Activated T-helper 2 cell treated with anti-CD3 and anti-CD28 coated beads, Interferon-gamma antibody, Interleukin-2, Interleukin-4, amounts not matched to agents 10 μg/mL and 5 μg/mL and 100 μg/mL, durations not matched to agents 14 hours and 24 hours and 36 hours (primary cell): ENCODE measurements at regions of chr17 and their contacts with region 1.

Region 1: DNA sequence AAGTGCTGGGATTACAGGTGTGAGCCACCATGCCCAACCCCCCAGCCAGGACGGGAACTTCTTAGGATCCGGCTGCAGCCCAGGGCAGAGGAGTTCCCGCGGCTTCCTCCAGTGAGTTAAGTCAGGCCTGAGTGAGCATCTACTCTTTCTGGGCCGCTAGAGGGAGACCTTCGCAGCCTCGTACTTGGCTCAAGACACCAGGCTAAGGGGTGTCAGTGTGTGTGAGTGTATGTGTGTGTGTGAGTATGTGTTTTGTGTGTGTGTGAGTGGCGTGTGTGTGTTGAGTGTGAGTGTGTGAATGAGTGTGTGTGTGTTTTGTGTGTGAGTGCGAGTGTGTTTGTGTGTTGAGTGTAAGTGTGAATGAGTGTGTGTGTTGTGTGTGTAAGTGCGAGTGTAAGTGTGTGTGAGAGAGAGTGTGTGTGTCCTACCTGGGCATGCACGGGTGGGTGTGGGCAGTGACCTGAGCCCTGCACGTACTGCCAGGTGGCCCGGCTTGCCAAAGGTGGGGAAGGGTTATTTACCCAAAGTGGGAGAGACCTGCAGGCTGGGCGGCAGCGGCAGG is 58.5 kb downstream of the TMEM235 start:
- DNase-seq: peak; percentile 62
- H3K4me3 Mint-ChIP-seq: no peak overlapping the region
- H3K27ac Mint-ChIP-seq: no peak overlapping the region
- H3K4me1 Mint-ChIP-seq: peaks cover 2% of the 10 kb centered on the region
- H3K27me3 Mint-ChIP-seq: no peaks in the 10 kb centered on the region

Region 2: DNA sequence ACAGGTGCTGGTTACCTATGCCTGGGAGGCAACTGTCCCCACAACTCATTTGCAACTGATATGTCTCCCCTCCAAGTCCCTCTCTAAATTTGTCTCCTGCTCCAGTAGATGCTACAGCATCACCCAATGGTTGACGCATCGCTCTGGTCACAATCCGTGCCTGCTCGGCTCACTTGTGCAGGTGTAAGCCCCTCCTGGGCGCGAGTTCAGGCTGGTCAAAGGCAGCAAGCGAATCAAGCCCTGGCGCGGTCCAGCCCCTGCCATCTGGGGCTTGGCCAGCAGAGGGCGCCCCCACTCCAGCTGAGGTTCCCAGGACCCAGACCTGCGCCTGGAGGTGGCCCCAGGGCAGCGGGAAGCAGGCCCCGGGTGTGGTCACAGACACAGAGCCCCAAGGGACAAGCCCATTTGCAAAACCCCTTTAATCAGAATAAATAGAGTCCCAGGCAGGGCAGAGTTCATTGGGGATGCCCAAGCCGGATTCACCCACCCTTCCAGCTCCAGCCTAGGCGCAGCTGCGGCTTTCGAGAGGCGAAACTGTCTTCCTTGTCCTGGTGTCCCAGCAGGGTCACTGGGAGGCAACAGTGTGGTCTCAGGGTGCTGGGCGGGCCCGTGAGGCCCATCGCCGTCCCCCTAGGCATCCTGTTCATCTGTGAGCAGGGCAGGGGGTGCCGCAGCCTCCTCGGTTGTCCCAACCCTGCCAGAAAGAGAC is 177.2 kb before region 1 on chr17:
- intact Hi-C with region 1: no loop called
- DNase-seq: peak; percentile 69
- H3K4me3 Mint-ChIP-seq: no peak overlapping the region
- H3K27ac Mint-ChIP-seq: peak overlapping the region; percentile 84
- H3K4me1 Mint-ChIP-seq: peaks cover 33% of the 10 kb centered on the region
- H3K27me3 Mint-ChIP-seq: no peaks in the 10 kb centered on the region

Region 3: DNA sequence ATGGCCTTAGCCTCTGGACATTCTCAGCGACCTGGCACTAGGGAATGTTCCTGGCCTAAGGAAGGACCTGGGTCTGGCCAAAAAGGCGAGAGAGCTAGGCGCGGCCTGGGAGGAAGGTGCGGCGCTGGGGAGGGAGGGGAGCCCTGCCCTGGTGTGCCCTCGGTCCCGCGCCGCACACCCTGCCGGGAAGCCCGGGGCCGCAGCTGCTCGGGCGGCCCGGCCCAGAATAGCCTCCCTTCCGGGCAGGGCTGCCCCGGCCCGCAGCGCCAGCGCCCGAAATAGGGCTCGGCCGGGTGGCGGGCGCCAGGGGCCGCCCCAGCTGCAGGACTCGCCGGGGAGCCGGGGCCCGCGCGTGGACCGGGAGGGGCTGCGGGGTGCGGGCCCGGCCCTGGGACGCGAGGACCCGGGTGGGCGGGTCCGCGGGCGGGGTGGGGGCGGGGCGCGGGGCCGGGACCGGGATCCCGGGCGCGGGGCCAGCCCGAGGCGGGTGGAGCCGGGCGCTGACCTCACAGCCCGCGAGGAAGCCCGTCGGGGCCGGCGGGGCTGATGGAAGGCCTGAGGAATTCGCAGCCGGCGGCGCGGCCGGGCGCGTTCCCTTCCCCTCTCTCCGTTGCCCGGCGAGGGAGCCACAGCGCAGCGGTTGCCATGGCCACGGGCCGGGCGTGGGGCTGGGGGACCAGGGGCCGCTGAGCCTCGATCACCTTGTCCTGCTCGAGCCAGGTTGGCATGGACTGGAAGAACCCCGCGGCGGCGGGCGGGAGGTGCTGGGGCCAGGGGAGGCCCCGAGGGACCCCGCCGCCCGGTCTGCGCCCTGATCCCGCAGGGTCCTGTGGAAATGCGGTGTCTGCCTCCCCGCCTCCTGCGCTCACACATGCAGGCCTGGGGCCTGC is 51.9 kb after region 1 on chr17:
- intact Hi-C with region 1: no loop called
- DNase-seq: no peak
- H3K4me3 Mint-ChIP-seq: no peak overlapping the region
- H3K27ac Mint-ChIP-seq: no peak overlapping the region
- H3K4me1 Mint-ChIP-seq: peaks cover 35% of the 10 kb centered on the region
- H3K27me3 Mint-ChIP-seq: peaks cover 9% of the 10 kb centered on the region

Region 4: GRCh38 chr17:78421484-78422266 is 131.8 kb after region 1 on chr17:
- intact Hi-C with region 1: loop called (anchors 5 kb)
- DNase-seq: peak; percentile 61
- H3K4me3 Mint-ChIP-seq: no peak overlapping the region
- H3K27ac Mint-ChIP-seq: peak overlapping the region; percentile 71
- H3K4me1 Mint-ChIP-seq: peaks cover 21% of the 10 kb centered on the region
- H3K27me3 Mint-ChIP-seq: no peaks in the 10 kb centered on the region